K562 (cell line): ENCODE measurements at regions of chr15 and their contacts with region 1.

Region 1: GRCh38 chr15:38563723-38564519 is 693 bp downstream of the RASGRP1 start:
- DNase-seq: peak; percentile 72 to 81 (median 77)
- ATAC-seq: peak; percentile 94
- H3K4me3 ChIP-seq: peak overlapping the region; percentile 51
- H3K27ac ChIP-seq: no peak overlapping the region
- H3K4me1 ChIP-seq: peaks cover 0 to 16% of the 10 kb centered on the region in 2 experiments; a peak in 3 of 5 replicates
- H3K27me3 ChIP-seq: peaks cover 4 to 17% of the 10 kb centered on the region in 2 experiments; a peak in 3 of 5 replicates
- CTCF ChIP-seq: peak; percentile 75 to 88 (median 78)
- EP300 ChIP-seq: no peak
- POLR2A ChIP-seq: no peak
- RAD21 ChIP-seq: peak; percentile 77 to 79

Region 2: DNA sequence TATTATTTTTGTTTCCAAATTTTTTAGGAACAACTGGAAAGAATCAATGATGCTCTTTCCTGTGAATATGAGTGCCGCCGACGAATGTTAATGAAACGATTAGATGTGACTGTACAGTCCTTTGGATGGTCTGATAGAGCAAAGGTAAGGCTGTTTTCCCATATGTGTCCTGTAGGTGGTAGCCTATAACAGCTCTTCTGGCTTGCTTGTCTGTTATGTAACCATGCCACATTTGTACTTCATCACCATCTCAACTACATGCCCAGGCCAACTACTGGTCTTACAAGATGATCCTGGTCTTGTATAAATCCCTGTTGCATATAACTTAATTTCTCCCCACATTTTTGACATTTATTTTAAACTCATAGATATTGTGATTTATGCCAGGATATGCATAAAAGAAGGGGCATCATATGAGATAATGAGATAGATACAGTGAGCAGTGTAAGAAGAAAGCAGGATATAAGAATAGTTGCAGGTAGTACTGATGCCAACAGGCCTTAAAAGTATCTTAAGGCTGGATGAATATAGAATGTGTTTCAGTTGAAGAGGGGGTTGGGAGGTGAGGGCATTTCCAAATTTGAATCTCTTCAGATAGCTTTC is 89.7 kb before region 1 on chr15:
- CTCF ChIA-PET with region 1: interaction called, 3 read pairs
- POLR2A ChIA-PET with region 1: no interaction called
- in situ Hi-C with region 1: no loop called
- intact Hi-C with region 1: loop called (anchors 10 kb)
- DNase-seq: peak; percentile 35 to 58 (median 48)
- ATAC-seq: peak; percentile 92
- H3K4me3 ChIP-seq: no peak overlapping the region
- H3K27ac ChIP-seq: no peak overlapping the region
- H3K4me1 ChIP-seq: no peaks in the 10 kb centered on the region
- H3K27me3 ChIP-seq: no peaks in the 10 kb centered on the region
- CTCF ChIP-seq: peak; percentile 48 to 70 (median 69)
- EP300 ChIP-seq: no peak
- POLR2A ChIP-seq: no peak
- RAD21 ChIP-seq: peak; percentile 83 to 85

Region 3: DNA sequence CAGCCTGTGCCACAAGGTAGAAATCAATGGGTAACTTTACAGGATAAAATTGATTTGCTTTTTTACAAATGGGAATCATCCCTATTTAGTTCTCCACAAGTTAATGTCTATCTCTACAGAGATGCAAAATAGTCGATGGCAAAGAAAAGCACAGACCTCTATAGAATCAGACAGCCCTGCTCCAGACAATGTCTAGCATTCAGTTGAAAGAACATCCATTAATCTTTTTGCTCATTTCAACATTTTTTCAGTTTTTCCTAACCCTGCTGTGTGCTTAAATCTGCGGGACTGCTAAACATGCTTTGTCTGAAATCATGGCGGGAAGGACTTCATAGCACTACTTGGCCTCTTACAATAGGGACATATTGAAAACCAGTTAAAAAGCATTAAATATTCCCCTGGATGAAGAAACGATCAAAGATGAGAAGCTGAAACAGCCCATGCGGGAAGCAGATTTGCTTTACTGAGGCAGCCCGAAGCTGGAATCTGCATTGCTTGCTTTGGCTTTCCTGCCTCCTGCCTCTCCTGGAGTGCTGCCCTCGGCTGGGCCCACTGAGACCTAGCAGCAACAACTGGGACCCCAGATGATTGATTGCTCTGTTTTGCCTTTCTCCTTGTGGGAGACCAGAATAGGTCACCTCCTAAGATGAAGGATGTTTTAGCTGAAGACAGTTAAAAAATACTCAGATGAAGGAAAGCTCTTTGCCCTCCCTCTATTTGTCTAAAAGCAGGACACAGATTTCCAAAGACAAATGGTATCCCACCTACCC is 39.2 kb after region 1 on chr15:
- CTCF ChIA-PET with region 1: interaction called, 3 read pairs
- POLR2A ChIA-PET with region 1: no interaction called
- in situ Hi-C with region 1: no loop called
- intact Hi-C with region 1: loop called (anchors 2 kb)
- DNase-seq: peak in 1 of 4 experiments; percentile 43
- ATAC-seq: no peak
- H3K4me3 ChIP-seq: no peak overlapping the region
- H3K27ac ChIP-seq: no peak overlapping the region; the same call in 1 of the 3 replicates
- H3K4me1 ChIP-seq: peaks cover 26 to 43% of the 10 kb centered on the region in 2 experiments; a peak in 4 of 5 replicates
- H3K27me3 ChIP-seq: no peaks in the 10 kb centered on the region
- CTCF ChIP-seq: no peak
- EP300 ChIP-seq: no peak
- POLR2A ChIP-seq: no peak
- RAD21 ChIP-seq: no peak; a peak in 1 of 4 replicates

Region 4: GRCh38 chr15:38624244-38625205 is 60.6 kb after region 1 on chr15:
- CTCF ChIA-PET with region 1: interaction called, 23 read pairs
- POLR2A ChIA-PET with region 1: interaction called, 3 read pairs
- in situ Hi-C with region 1: no loop called
- intact Hi-C with region 1: loop called (anchors 1 kb)
- DNase-seq: no peak
- ATAC-seq: no peak
- H3K4me3 ChIP-seq: no peak overlapping the region
- H3K27ac ChIP-seq: no peak overlapping the region
- H3K4me1 ChIP-seq: peaks cover 0 to 2% of the 10 kb centered on the region in 2 experiments; a peak in 2 of 5 replicates
- H3K27me3 ChIP-seq: peaks cover 0 to 4% of the 10 kb centered on the region in 2 experiments; a peak in 3 of 5 replicates
- CTCF ChIP-seq: no peak
- EP300 ChIP-seq: no peak
- POLR2A ChIP-seq: no peak
- RAD21 ChIP-seq: no peak

Region 5: DNA sequence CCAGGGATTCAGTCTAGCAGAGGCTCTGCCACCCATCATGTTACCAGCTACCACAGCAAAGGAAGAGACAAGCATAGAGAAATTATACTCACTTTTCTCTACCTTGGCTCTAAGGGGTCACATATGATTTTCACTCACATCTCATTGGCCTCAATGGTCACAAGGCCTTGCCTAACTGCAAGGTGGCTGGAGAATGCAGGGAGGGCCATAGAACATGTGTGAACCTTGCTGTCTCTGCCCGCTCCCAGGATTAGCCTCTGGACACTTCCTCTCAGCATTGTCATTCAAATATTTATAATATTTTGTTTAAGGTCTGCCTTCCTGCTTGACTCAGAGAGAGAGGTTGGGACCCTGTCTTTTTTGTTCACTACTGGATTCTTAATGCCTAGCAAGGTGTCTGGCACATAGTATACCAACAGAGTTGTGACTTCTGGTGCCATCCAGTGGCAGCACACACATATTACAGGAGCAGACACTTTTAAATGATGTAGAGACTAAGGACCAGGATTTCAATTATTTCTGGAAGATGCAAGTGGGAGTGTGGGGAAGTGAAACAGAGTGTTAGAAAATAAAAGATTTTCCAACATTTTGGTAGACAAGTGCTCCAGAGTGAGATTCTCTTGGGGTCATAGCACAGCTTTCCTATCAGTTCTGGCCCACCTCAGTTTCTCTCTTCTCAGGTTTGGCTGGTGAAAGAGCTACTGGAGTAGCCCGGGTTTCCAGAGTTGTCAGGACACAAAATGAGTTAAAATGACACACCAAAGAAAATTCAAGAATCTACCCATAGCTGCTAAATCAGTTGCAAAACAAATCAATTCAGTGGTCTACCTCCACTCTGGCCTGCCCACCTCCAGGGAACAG is 119.7 kb after region 1 on chr15:
- CTCF ChIA-PET with region 1: interaction called, 5 read pairs
- POLR2A ChIA-PET with region 1: interaction called, 5 read pairs
- in situ Hi-C with region 1: no loop called
- intact Hi-C with region 1: loop called (anchors 5 kb)
- DNase-seq: peak; percentile 28 to 62 (median 32)
- ATAC-seq: peak; percentile 88
- H3K4me3 ChIP-seq: no peak overlapping the region
- H3K27ac ChIP-seq: no peak overlapping the region
- H3K4me1 ChIP-seq: no peaks in the 10 kb centered on the region
- H3K27me3 ChIP-seq: peaks cover 0 to 2% of the 10 kb centered on the region in 2 experiments; a peak in 1 of 5 replicates
- CTCF ChIP-seq: peak; percentile 63 to 72 (median 65); a peak in 5 of 6 replicates
- EP300 ChIP-seq: no peak
- POLR2A ChIP-seq: no peak
- RAD21 ChIP-seq: peak; percentile 75 to 80

Region 6: GRCh38 chr15:38699633-38700230 is 135.8 kb after region 1 on chr15:
- CTCF ChIA-PET with region 1: no interaction called
- POLR2A ChIA-PET with region 1: no interaction called
- in situ Hi-C with region 1: loop called (anchors 10 kb)
- intact Hi-C with region 1: no loop called
- DNase-seq: peak; percentile 68 to 79 (median 74)
- ATAC-seq: peak; percentile 94
- H3K4me3 ChIP-seq: no peak overlapping the region
- H3K27ac ChIP-seq: no peak overlapping the region
- H3K4me1 ChIP-seq: no peaks in the 10 kb centered on the region
- H3K27me3 ChIP-seq: peaks cover 0 to 8% of the 10 kb centered on the region in 2 experiments; a peak in 3 of 5 replicates
- CTCF ChIP-seq: peak; percentile 56 to 86 (median 74)
- EP300 ChIP-seq: no peak
- POLR2A ChIP-seq: no peak
- RAD21 ChIP-seq: peak; percentile 34 to 68